MCF 10A (cell line): ENCODE measurements at regions of chr1 and their contacts with region 1.

Region 1: GRCh38 chr1:243255791-243256512 is at the start of gene SDCCAG8:
- DNase-seq: peak; percentile 100
- H3K4me3 Mint-ChIP-seq: peak within 1 kb of the TSS; percentile 84
- H3K27ac Mint-ChIP-seq: peak within 1 kb of the TSS; percentile 97
- H3K4me1 Mint-ChIP-seq: peaks cover 24% of the 10 kb centered on the region
- H3K27me3 Mint-ChIP-seq: no peaks in the 10 kb centered on the region
- CTCF ChIP-seq: no peak
- total RNA-seq, gene SDCCAG8: 81.1 and 128 TPM in 2 replicates

Region 2: DNA sequence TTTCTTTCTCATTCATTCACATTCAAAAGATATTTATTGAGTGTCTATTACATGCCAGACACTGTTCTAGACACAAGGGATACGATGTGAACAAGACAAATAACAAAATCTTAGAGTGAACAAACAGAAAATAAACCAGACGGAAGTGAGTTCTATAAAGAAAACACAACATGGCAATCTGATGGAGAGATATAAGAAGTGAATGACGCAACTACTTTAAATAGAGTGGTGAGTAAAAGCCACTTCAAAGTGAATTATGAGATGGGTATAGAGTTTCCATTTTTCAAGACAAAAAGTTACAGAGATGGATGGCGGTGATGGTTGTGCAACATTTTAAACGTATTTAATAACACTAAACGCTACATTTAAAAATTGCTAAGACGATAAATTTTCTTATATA is 76.2 kb before region 1 on chr1:
- CTCF ChIA-PET with region 1: no interaction called
- POLR2A ChIA-PET with region 1: interaction called, 3 read pairs
- intact Hi-C with region 1: loop called (anchors 5 kb)
- DNase-seq: peak; percentile 38
- H3K4me3 Mint-ChIP-seq: no peak overlapping the region
- H3K27ac Mint-ChIP-seq: no peak overlapping the region
- H3K4me1 Mint-ChIP-seq: no peaks in the 10 kb centered on the region
- H3K27me3 Mint-ChIP-seq: no peaks in the 10 kb centered on the region
- CTCF ChIP-seq: no peak

Region 3: GRCh38 chr1:243230914-243231313 is 25.0 kb before region 1 on chr1:
- CTCF ChIA-PET with region 1: interaction called, 10 read pairs
- POLR2A ChIA-PET with region 1: interaction called, 208 read pairs
- intact Hi-C with region 1: no loop called
- DNase-seq: peak; percentile 39
- H3K4me3 Mint-ChIP-seq: no peak overlapping the region
- H3K27ac Mint-ChIP-seq: no peak overlapping the region
- H3K4me1 Mint-ChIP-seq: peaks cover 15% of the 10 kb centered on the region
- H3K27me3 Mint-ChIP-seq: no peaks in the 10 kb centered on the region
- CTCF ChIP-seq: no peak

Region 4: GRCh38 chr1:243271996-243272395 is 16.0 kb after region 1 on chr1:
- CTCF ChIA-PET with region 1: interaction called, 16 read pairs
- POLR2A ChIA-PET with region 1: interaction called, 161 read pairs
- intact Hi-C with region 1: no loop called
- DNase-seq: no peak
- H3K4me3 Mint-ChIP-seq: no peak overlapping the region
- H3K27ac Mint-ChIP-seq: no peak overlapping the region
- H3K4me1 Mint-ChIP-seq: peaks cover 24% of the 10 kb centered on the region
- H3K27me3 Mint-ChIP-seq: no peaks in the 10 kb centered on the region
- CTCF ChIP-seq: no peak

Region 5: GRCh38 chr1:243294723-243295121 is 38.8 kb after region 1 on chr1:
- CTCF ChIA-PET with region 1: interaction called, 5 read pairs
- POLR2A ChIA-PET with region 1: interaction called, 84 read pairs
- intact Hi-C with region 1: loop called (anchors 1 kb)
- DNase-seq: peak; percentile 79
- H3K4me3 Mint-ChIP-seq: peak overlapping the region; percentile 2
- H3K27ac Mint-ChIP-seq: peak overlapping the region; percentile 96
- H3K4me1 Mint-ChIP-seq: peaks cover 28% of the 10 kb centered on the region
- H3K27me3 Mint-ChIP-seq: no peaks in the 10 kb centered on the region
- CTCF ChIP-seq: no peak

Region 6: DNA sequence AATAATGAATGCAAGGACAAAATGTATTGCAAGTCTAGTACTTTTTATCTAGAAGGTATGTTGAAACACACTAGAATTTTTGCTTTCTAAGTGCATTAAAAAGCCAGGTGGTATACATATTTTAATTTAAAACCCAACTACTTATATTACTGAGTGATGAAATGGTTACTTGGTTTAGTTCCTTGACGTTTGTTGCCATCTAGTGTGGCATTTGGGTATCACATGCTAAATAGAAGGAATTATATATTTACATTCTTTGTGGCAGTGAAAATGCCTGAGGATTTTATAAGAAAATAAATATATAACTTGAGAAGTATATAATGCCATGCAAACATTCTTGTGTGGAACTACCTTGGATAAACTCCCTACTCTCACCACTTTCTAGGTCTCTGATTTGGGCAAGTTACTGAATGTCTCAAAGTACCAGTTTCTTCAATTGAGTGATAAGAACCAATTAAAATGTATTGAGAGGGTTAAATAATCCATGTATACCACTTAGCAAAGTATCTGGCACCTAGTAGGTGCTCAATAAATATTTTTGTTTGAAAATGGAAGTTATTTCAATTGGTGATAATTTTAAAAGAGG is 69.4 kb after region 1 on chr1:
- CTCF ChIA-PET with region 1: no interaction called
- POLR2A ChIA-PET with region 1: interaction called, 3 read pairs
- intact Hi-C with region 1: loop called (anchors 1 kb)
- DNase-seq: peak; percentile 82
- H3K4me3 Mint-ChIP-seq: no peak overlapping the region
- H3K27ac Mint-ChIP-seq: no peak overlapping the region
- H3K4me1 Mint-ChIP-seq: no peaks in the 10 kb centered on the region
- H3K27me3 Mint-ChIP-seq: no peaks in the 10 kb centered on the region
- CTCF ChIP-seq: peak; percentile 97

Region 7: DNA sequence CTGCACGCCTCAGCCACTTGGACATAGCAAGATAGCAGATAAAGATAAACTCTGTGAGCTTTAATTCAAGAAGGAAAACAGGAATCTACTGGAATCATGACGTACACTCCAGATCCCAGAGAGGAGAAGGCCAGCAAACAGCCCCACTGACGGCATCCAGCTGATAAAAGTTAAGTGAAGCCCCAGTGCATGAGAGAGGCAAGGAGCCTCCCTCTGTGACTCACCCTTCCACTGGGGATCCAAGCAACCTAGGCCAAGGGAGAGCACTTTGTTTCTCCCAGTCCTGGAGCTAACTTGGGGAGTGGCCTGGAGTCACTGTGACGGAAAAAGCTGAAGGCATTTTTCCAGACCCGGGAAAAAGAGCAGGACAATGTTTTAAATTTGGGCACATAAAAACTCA is 324.1 kb after region 1 on chr1:
- CTCF ChIA-PET with region 1: no interaction called
- POLR2A ChIA-PET with region 1: no interaction called
- intact Hi-C with region 1: no loop called
- DNase-seq: peak; percentile 33
- H3K4me3 Mint-ChIP-seq: no peak overlapping the region
- H3K27ac Mint-ChIP-seq: no peak overlapping the region
- H3K4me1 Mint-ChIP-seq: no peaks in the 10 kb centered on the region
- H3K27me3 Mint-ChIP-seq: no peaks in the 10 kb centered on the region
- CTCF ChIP-seq: no peak